Panc1 (cell line): ENCODE measurements at regions of chr3 and their contacts with region 1.

Region 1: DNA sequence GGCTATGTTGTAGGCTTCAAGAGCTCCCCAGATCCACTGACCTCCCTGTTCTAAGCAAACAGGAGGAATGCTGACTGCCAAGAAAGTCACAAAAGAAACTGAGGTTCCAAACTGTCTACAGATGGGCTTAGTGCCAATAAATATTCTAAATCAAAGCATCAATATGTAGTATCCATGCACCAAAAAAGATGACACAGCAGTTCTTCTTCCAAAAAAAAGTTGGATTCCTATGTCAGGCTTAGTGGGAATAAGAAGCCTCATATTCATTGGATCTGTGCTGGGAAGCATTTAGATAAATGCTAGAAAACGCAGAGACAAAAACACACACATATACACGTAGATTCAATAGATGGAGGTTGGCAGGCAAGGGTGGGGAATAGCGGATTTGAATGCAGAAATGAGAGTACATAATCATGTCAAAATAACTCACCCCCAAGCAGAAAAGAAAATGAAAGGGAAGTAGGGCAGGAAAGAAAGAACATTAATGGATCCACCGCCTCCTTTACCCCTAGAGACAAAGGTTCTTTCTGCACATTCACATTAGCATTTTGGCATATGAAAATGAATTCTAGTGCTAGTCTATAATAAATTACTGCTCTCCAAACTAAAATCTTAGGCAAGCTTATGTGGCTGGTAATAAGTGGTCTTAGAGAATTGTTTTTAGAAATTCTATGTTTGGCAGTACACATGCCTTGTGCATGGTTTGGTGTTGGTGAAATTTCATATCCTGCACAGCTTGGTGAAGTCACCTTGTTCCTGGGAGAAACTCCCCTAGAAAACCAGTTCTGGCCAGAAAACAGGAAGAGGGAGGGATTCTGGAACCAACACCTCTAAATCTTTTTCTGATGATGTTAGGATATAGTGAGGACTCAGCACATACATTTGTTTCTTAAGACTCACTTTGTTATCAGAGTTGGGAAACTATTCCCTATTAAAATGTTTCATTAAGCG is 283.4 kb downstream of the LSAMP start:
- DNase-seq: no peak
- ATAC-seq: no peak
- H3K4me3 ChIP-seq: no peak overlapping the region
- H3K27ac ChIP-seq: no peak overlapping the region
- H3K4me1 ChIP-seq: no peaks in the 10 kb centered on the region
- H3K27me3 ChIP-seq: no peaks in the 10 kb centered on the region
- CTCF ChIP-seq: no peak

Region 2: GRCh38 chr3:116112696-116113095 is 49.2 kb before region 1 on chr3:
- CTCF ChIA-PET with region 1: no interaction called
- POLR2A ChIA-PET with region 1: no interaction called
- in situ Hi-C with region 1: no loop called
- intact Hi-C with region 1: no loop called
- DNase-seq: no peak
- ATAC-seq: no peak
- H3K4me3 ChIP-seq: no peak overlapping the region
- H3K27ac ChIP-seq: no peak overlapping the region
- H3K4me1 ChIP-seq: no peaks in the 10 kb centered on the region
- H3K27me3 ChIP-seq: no peaks in the 10 kb centered on the region
- CTCF ChIP-seq: no peak

Region 3: GRCh38 chr3:117103675-117104074 is 941.8 kb after region 1 on chr3:
- CTCF ChIA-PET with region 1: no interaction called
- POLR2A ChIA-PET with region 1: interaction called, 19 read pairs
- in situ Hi-C with region 1: no loop called
- intact Hi-C with region 1: no loop called
- DNase-seq: no peak
- ATAC-seq: no peak
- H3K4me3 ChIP-seq: no peak overlapping the region
- H3K27ac ChIP-seq: no peak overlapping the region
- H3K4me1 ChIP-seq: no peaks in the 10 kb centered on the region
- H3K27me3 ChIP-seq: no peaks in the 10 kb centered on the region
- CTCF ChIP-seq: peak; percentile 3; the same call in 1 of the 2 replicates